Colonic mucosa (tissue), 4 donors: ENCODE measurements at regions of chr17 and their contacts with region 1.

Region 1: GRCh38 chr17:59918975-59919530 is 26.1 kb downstream of the RPS6KB1 start:
- DNase-seq: no peak
- H3K4me3 ChIP-seq: no peak overlapping the region
- H3K27ac ChIP-seq: no peak overlapping the region
- H3K4me1 ChIP-seq: no peaks in the 10 kb centered on the region
- H3K27me3 ChIP-seq: no peaks in the 10 kb centered on the region
- CTCF ChIP-seq: no peak

Region 2: DNA sequence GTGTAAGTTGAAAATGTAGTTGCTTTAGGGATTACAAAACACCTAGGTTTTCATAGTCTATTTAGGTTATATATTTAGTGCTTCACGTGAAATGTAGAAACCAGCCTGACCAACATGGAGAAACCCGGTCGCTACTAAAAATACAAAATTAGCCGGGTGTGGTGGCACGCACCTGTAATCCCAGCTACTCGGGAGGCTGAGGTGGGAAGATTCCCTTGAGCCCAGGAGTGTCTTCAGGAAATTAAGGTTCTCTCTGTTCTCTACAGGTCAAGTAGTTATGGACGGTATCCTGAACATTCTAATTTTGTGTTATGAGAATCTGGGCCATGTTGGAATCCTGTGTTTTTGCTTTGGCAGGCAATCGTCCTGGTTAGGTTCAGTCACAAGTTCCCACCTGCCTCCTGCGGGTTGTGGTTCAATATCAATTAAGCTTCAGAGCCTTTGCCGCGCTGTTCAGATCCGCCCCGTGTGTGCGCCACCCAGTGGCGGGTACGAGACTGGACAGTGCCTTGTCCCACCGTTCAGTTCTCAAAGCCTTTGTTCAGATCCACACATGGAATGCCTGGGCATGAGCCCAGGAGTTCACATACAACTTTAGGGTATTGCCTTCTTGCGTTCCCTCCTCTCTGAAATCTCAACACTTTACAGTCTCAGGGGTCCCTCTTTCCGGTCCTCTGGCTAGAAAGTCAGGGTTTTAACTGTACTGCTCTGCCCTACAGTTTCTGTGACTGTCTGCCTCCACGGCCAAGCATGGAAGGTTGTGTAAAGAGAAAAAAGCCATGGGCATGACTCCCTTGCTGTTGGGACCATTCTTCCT is 118.0 kb after region 1 on chr17:
- intact Hi-C with region 1: loop called (anchors 5 kb)
- DNase-seq: peak; percentile 69
- H3K4me3 ChIP-seq: no peak overlapping the region
- H3K27ac ChIP-seq: no peak overlapping the region
- H3K4me1 ChIP-seq: no peaks in the 10 kb centered on the region
- H3K27me3 ChIP-seq: no peaks in the 10 kb centered on the region
- CTCF ChIP-seq: peak; percentile 82

Region 3: GRCh38 chr17:60231234-60231633 is 312.2 kb after region 1 on chr17:
- intact Hi-C with region 1: no loop called
- DNase-seq: no peak
- H3K4me3 ChIP-seq: no peak overlapping the region
- H3K27ac ChIP-seq: no peak overlapping the region
- H3K4me1 ChIP-seq: no peaks in the 10 kb centered on the region
- H3K27me3 ChIP-seq: no peaks in the 10 kb centered on the region
- CTCF ChIP-seq: peak; percentile 46